B cell (primary cell): ENCODE measurements at regions of chr5 and their contacts with region 1.

Region 1: DNA sequence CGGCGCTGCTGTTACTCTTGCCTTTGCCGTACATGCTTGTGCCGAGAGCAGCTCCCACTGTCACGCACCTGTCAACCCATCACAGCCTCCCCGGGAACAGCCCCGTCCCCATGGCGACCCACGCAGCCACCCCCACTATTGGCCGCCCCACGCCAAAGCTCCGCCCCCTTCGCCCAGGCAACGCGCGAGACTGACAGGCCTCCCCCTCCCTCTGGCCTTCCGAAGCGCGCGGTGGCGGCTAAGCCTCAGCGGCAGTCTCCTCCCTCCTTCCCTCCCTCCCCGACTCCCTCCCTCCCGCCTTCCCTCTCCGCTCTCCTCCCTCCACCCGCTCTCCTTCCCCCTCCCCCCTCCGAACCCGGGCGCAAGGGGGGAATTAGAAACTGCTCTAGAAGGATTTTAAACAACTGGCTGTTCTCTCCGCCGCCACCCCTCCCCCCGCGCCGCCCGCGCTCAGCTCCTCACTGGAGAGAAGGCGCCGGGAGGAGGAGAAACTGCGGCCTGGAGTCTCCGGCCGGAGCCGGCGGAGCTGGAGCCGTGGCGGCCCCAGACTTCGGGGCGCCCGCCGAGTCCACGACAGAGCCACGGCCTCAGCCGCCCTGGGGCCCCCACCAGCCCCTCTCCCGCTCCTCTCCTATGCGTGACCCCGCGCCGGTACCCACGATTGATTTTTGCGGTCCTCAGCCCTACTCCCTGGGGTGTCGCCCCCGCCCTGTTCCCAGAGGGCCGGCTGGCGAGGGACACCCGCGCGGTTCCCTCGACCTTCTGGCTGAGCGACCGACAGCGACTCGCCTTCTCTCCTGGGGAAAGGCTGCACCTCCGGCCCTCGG is at the start of gene SSBP2:
- DNase-seq: peak; percentile 99
- ATAC-seq: peak; percentile 82
- H3K4me3 ChIP-seq: peak within 1 kb of the TSS; percentile 26 to 84 (median 74)
- H3K4me3 Mint-ChIP-seq: peak within 1 kb of the TSS; percentile 97
- H3K27ac ChIP-seq: peak within 1 kb of the TSS; percentile 74 to 89
- H3K27ac Mint-ChIP-seq: peak within 1 kb of the TSS; percentile 99
- H3K4me1 ChIP-seq: peaks cover 17 to 32% of the 10 kb centered on the region in 2 donors
- H3K4me1 Mint-ChIP-seq: peaks cover 35% of the 10 kb centered on the region
- H3K27me3 ChIP-seq: no peaks in the 10 kb centered on the region
- H3K27me3 Mint-ChIP-seq: no peaks in the 10 kb centered on the region
- CTCF ChIP-seq: no peak
- total RNA-seq, gene SSBP2: 40.9 and 41.7 TPM in 2 replicates

Region 2: GRCh38 chr5:81301271-81302015 is 449.8 kb before region 1 on chr5 and contains the start of gene ZCCHC9:
- CTCF ChIA-PET with region 1: no interaction called
- POLR2A ChIA-PET with region 1: interaction called, 3 read pairs
- intact Hi-C with region 1: loop called (anchors 2 kb)
- DNase-seq: peak; percentile 95
- ATAC-seq: peak; percentile 92
- H3K4me3 ChIP-seq: peak within 1 kb of the TSS; percentile 77 to 98 (median 91)
- H3K4me3 Mint-ChIP-seq: peak within 1 kb of the TSS; percentile 91
- H3K27ac ChIP-seq: peak within 1 kb of the TSS; percentile 63 to 89
- H3K27ac Mint-ChIP-seq: peak within 1 kb of the TSS; percentile 93
- H3K4me1 ChIP-seq: peaks cover 23 to 26% of the 10 kb centered on the region in 2 donors
- H3K4me1 Mint-ChIP-seq: peaks cover 33% of the 10 kb centered on the region
- H3K27me3 ChIP-seq: no peaks in the 10 kb centered on the region
- H3K27me3 Mint-ChIP-seq: no peaks in the 10 kb centered on the region
- CTCF ChIP-seq: peak; percentile 29
- total RNA-seq, gene ZCCHC9: 23.0 and 23.7 TPM in 2 replicates

Region 3: DNA sequence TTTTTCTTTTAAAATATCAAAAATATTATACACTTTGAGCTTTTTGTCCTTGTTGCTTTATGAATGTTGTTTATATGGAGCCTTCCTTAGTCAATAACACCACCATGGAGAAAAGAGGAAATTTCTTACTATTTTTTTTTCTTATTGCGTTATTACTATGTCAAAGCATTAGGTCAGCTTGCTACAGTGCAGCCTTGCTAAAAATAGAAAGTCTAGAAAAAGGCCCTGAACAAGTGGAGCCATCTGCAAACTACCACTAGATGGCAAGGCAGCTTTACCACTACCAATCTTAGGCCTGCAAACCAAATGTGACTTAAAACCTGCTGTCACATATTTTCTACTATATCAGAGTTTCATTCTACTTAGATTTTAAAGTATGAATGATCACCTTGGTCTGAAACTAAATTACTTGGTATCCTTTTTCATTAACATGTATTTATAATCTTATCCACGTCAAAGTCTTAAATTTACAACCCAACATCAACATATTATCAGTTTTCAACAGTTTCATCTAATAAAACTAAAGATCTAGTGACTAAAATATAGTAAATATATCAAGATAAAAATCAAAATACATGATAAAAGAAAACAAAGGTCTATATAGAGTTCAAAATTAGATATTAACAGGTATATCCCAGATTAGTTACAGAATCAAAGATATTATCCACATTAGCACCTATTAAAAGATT is 244.2 kb before region 1 on chr5:
- CTCF ChIA-PET with region 1: interaction called, 3 read pairs
- POLR2A ChIA-PET with region 1: interaction called, 4 read pairs
- intact Hi-C with region 1: loop called (anchors 1 kb)
- DNase-seq: peak; percentile 79
- ATAC-seq: peak; percentile 100
- H3K4me3 ChIP-seq: no peak overlapping the region
- H3K4me3 Mint-ChIP-seq: no peak overlapping the region
- H3K27ac ChIP-seq: no peak overlapping the region
- H3K27ac Mint-ChIP-seq: no peak overlapping the region
- H3K4me1 ChIP-seq: no peaks in the 10 kb centered on the region
- H3K4me1 Mint-ChIP-seq: peaks cover 4% of the 10 kb centered on the region
- H3K27me3 ChIP-seq: no peaks in the 10 kb centered on the region
- H3K27me3 Mint-ChIP-seq: no peaks in the 10 kb centered on the region
- CTCF ChIP-seq: peak; percentile 80

Region 4: DNA sequence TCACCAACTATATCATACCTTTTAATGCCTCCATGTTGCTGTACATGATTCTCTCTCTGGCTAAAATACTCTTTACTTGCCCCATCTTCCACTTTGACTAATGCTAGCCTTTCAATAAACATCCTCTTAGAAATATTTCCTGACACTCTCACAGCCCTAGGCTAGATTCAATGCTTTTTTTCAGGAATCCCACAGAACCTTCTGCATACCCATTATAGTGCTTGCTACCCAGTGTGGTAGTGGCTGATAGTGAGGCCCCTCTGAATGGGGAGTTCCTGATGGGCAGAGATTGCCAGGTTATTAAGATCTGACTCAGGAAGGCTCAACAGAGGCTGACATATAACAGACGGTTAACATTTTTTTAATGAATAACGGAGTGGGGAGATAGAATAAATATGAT is 11.9 kb before region 1 on chr5:
- CTCF ChIA-PET with region 1: no interaction called
- POLR2A ChIA-PET with region 1: interaction called, 3 read pairs
- intact Hi-C with region 1: loop called (anchors 2 kb)
- DNase-seq: no peak
- ATAC-seq: no peak
- H3K4me3 ChIP-seq: no peak overlapping the region
- H3K4me3 Mint-ChIP-seq: no peak overlapping the region
- H3K27ac ChIP-seq: no peak overlapping the region
- H3K27ac Mint-ChIP-seq: no peak overlapping the region
- H3K4me1 ChIP-seq: peaks cover 0 to 4% of the 10 kb centered on the region in 2 donors
- H3K4me1 Mint-ChIP-seq: peaks cover 48% of the 10 kb centered on the region
- H3K27me3 ChIP-seq: no peaks in the 10 kb centered on the region
- H3K27me3 Mint-ChIP-seq: no peaks in the 10 kb centered on the region
- CTCF ChIP-seq: no peak

Region 5: GRCh38 chr5:81851481-81852178 is 100.4 kb after region 1 on chr5:
- CTCF ChIA-PET with region 1: interaction called, 52 read pairs
- POLR2A ChIA-PET with region 1: interaction called, 81 read pairs
- intact Hi-C with region 1: loop called (anchors 1 kb)
- DNase-seq: peak; percentile 90
- ATAC-seq: peak; percentile 89
- H3K4me3 ChIP-seq: peak overlapping the region; percentile 49 to 75 (median 71)
- H3K4me3 Mint-ChIP-seq: peak overlapping the region; percentile 99
- H3K27ac ChIP-seq: peak overlapping the region; percentile 34 to 67
- H3K27ac Mint-ChIP-seq: peak overlapping the region; percentile 98
- H3K4me1 ChIP-seq: peaks cover 17 to 24% of the 10 kb centered on the region in 2 donors
- H3K4me1 Mint-ChIP-seq: peaks cover 33% of the 10 kb centered on the region
- H3K27me3 ChIP-seq: no peaks in the 10 kb centered on the region
- H3K27me3 Mint-ChIP-seq: no peaks in the 10 kb centered on the region
- CTCF ChIP-seq: no peak

Region 6: GRCh38 chr5:82174128-82174918 is 423.1 kb after region 1 on chr5:
- CTCF ChIA-PET with region 1: no interaction called
- POLR2A ChIA-PET with region 1: no interaction called
- intact Hi-C with region 1: loop called (anchors 5 kb)
- DNase-seq: peak; percentile 74
- ATAC-seq: peak; percentile 88
- H3K4me3 ChIP-seq: no peak overlapping the region
- H3K4me3 Mint-ChIP-seq: peak overlapping the region; percentile 31
- H3K27ac ChIP-seq: peak overlapping the region in 1 of 2 donors; percentile 32
- H3K27ac Mint-ChIP-seq: peak overlapping the region; percentile 60
- H3K4me1 ChIP-seq: peaks cover 9% of the 10 kb centered on the region in 2 donors
- H3K4me1 Mint-ChIP-seq: peaks cover 18% of the 10 kb centered on the region
- H3K27me3 ChIP-seq: no peaks in the 10 kb centered on the region
- H3K27me3 Mint-ChIP-seq: no peaks in the 10 kb centered on the region
- CTCF ChIP-seq: peak; percentile 71